Dorsolateral prefrontal cortex (tissue), 120 donors: ENCODE measurements at regions of chr19 and their contacts with region 1.

Region 1: DNA sequence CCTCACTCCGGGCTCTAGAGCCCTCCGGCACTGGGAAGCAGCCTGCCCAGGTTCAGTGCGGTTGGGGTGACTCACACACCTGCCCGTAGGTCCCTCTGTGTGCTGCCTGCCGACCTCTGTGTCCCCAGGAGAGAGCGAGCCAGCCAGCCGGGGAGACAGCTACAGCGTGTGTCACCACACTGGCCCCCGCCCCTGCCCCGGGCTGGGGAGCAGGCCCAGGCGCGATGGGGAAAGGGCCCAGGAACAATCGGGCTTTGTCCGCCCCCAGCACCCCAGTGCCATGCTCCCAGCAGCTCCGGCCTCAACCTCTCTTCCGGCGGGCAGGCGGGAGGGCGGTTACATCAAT is at the start of gene KLK6:
- DNase-seq: peak; percentile 18 to 92 (median 86)
- H3K4me3 ChIP-seq: peak within 1 kb of the TSS; percentile 3 to 86 (median 62)
- H3K27ac ChIP-seq: peak within 1 kb of the TSS in 58 of 59 donors; percentile 79 to 100 (median 96)
- H3K27me3 ChIP-seq: peaks cover 0 to 49% (median 6%) of the 10 kb centered on the region in 45 donors
- CTCF ChIP-seq: peak in 14 of 56 donors; percentile 12 to 41 (median 26)
- total RNA-seq, gene KLK6: 4.5 to 252 (median 44.7) TPM

Region 2: DNA sequence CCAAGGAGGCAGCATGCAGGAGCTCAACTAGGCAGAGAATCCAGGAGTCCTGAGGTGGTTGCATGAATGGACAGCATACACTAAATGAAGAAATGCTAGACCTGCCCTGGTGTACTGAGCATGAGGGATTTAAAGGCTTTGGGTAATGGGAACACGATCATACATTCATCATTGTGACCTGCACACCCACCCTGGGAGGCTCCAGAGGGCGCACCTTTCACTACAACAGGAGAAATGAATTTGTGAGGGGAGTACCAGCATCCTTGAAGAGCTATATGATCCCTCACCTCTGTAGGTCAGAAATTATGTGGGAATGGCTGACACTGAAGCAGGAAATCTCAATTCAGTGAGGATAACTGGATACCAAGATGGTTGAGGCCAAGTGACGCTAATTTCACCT is 87.2 kb before region 1 on chr19:
- intact Hi-C with region 1: no loop called
- DNase-seq: no peak
- H3K4me3 ChIP-seq: no peak overlapping the region
- H3K27ac ChIP-seq: no peak overlapping the region
- H3K27me3 ChIP-seq: peaks cover 0 to 60% (median 26%) of the 10 kb centered on the region in 45 donors
- CTCF ChIP-seq: no peak

Region 3: DNA sequence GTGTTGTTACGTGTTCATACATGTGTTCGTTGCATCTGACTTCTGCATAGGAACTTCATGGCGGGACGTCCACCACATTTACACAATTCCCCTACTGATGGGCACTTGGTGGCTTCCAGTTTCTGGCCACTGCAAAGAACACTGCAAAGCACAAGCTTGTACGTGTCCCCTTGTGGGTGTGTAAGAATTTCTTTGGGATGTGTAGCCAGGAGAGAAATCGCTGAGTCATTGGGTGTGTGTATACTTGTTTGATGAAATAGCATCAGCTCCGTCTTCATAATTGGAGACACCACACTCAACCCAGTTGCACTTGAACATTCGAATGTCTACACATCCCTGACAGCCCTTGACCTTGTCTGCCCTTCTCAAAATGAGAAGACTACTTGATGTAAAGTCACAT is 35.7 kb before region 1 on chr19:
- intact Hi-C with region 1: loop called in 1 of 2 experiments (anchors 5 kb)
- DNase-seq: no peak
- H3K4me3 ChIP-seq: no peak overlapping the region
- H3K27ac ChIP-seq: no peak overlapping the region
- H3K27me3 ChIP-seq: peaks cover 0 to 39% (median 9%) of the 10 kb centered on the region in 45 donors
- CTCF ChIP-seq: no peak

Region 4: DNA sequence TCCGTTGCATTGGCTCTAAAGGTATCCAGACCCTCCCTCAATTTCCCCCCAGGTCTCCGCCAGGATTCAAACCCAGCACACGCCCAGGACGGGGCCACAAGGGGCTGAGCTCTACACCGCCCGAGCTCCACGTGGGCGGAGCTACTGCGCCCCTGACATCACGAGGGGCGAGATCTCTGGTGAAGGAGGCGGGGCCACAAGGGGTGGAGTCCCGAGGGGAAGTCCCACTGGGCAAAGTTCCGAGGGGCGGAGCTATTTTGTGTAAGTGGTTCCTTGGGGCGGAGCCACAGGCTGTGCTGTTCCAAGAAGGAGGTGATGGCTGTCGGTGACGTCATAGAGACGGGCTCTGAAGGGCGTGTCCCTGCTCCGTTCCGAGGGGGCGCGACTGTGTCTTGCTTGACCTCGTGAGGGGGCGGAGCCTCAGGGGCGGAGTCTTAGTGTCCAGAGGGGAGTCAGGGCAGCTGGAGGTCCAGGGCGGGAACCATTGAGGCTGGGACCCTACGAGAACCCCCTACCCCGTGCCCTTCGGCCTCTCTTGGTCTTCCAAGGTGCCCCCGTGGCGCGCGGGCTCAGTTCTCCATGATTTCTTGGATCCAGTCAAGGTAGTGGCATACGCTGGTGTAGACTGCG is 33.3 kb after region 1 on chr19:
- intact Hi-C with region 1: no loop called
- DNase-seq: no peak
- H3K4me3 ChIP-seq: no peak overlapping the region
- H3K27ac ChIP-seq: no peak overlapping the region
- H3K27me3 ChIP-seq: peaks cover 0 to 69% (median 30%) of the 10 kb centered on the region in 45 donors
- CTCF ChIP-seq: no peak

Region 5: DNA sequence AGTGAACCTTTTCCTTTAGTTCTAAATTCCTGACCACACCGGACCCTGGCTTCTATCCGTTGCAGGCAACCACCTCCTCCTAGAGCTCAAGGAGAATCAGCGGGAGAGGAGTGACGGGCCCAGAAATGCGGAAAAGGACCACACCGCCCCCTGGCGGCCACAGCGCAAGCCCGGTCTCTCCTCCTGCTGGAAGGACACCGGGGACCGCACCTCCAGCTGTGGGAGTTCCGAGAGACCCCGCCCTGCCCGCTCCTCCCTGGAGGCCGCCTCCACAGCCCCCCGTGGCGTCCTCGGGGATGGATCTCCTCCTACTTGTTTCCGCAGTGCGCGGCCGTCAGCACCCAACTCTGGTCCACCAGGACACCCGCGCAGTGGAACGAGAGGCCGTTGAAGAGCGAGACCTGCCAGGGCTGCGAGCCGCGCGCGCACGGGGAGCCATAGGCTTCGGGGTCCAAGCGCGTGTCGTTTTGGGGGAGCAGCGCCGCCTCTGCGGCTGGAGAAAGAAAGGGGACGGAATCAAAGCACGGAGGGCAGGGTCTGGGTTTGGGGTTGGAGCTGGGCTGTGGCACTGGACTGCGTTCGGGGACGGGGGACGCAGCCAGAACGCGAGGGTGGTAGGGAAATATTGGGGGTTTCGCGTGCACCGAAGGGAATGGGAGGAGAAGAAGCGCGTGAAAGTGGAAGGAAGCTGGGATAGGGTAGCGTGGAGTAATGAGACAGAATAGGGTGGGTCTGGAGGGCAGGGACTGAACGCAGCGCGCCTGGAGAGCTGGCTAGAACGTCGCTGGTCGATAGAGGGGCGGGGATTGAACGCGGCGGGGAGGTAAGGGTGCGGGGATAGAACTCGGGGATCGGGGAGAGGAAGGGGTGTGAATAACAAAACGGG is 47.7 kb after region 1 on chr19:
- intact Hi-C with region 1: loop called (anchors 2 to 5 kb)
- DNase-seq: peak in 9 of 10 donors; percentile 42 to 85 (median 80)
- H3K4me3 ChIP-seq: peak overlapping the region; percentile 5 to 72 (median 51)
- H3K27ac ChIP-seq: peak overlapping the region in 1 of 59 donors; percentile 52
- H3K27me3 ChIP-seq: peaks cover 0 to 69% (median 37%) of the 10 kb centered on the region in 45 donors
- CTCF ChIP-seq: peak; percentile 25 to 97 (median 84)

Region 6: GRCh38 chr19:51097166-51097738 is 127.9 kb after region 1 on chr19:
- intact Hi-C with region 1: loop called in 1 of 2 experiments (anchors 5 kb)
- DNase-seq: peak; percentile 48 to 72 (median 56)
- H3K4me3 ChIP-seq: no peak overlapping the region
- H3K27ac ChIP-seq: no peak overlapping the region
- H3K27me3 ChIP-seq: no peaks in the 10 kb centered on the region
- CTCF ChIP-seq: peak in 55 of 56 donors; percentile 36 to 71 (median 61)

Region 7: GRCh38 chr19:51887522-51888498 is 918.4 kb after region 1 on chr19 and contains the start of gene ZNF577:
- intact Hi-C with region 1: no loop called
- DNase-seq: peak; percentile 77 to 92 (median 88)
- H3K4me3 ChIP-seq: peak within 1 kb of the TSS; percentile 24 to 76 (median 66)
- H3K27ac ChIP-seq: peak within 1 kb of the TSS in 37 of 59 donors; percentile 4 to 85 (median 60)
- H3K27me3 ChIP-seq: no peaks in the 10 kb centered on the region
- CTCF ChIP-seq: peak in 10 of 56 donors; percentile 4 to 33 (median 11)
- total RNA-seq, gene ZNF577: 18.9 to 73.4 (median 37.6) TPM